Activated naive CD4-positive, alpha-beta T cell treated with anti-CD3 and anti-CD28 coated beads for 36 hours (primary cell): ENCODE measurements at regions of chr11 and their contacts with region 1.

Region 1: DNA sequence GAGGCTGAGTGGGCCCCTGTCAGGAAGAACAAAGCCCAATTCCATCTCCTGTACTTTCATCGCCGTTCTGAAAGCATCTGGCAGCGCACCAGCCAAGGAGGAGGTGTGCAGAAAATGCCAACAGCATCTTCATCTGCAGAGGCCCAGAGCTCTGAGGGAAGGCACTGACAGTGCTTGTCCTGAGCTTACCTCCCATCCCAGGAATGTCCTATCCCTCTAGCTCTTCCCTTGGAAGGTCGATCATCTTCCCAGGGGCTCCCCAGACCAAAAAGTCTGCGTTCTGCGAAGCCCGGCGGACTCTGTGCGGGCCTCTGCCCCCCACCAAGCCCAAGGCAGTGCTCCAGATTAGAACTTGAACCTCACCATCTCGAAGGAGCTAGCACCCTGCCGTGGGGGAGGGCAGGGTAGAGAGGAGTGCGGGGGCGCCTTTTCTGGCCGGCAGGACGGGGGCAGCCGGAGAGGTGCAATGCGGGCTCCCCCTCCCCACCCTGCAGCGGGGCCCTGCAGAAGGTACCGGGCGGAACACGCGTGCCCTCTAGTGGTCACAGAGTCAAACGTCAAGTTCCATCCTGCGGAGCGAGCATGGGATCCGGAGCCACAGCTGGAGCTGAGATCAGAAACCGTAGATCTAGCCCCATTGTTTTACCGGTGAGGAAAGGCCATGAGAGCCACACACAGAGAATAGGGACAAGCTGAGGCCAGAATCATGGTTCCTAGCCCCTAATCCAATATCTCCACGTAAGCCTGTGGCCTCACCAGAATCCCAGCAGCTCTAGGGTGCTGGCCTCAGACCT is 5.0 kb downstream of the SCN2B start:
- DNase-seq: peak; percentile 84
- H3K4me3 Mint-ChIP-seq: no peak overlapping the region
- H3K27ac Mint-ChIP-seq: no peak overlapping the region
- H3K4me1 Mint-ChIP-seq: peaks cover 2% of the 10 kb centered on the region
- H3K27me3 Mint-ChIP-seq: peaks cover 2% of the 10 kb centered on the region

Region 2: DNA sequence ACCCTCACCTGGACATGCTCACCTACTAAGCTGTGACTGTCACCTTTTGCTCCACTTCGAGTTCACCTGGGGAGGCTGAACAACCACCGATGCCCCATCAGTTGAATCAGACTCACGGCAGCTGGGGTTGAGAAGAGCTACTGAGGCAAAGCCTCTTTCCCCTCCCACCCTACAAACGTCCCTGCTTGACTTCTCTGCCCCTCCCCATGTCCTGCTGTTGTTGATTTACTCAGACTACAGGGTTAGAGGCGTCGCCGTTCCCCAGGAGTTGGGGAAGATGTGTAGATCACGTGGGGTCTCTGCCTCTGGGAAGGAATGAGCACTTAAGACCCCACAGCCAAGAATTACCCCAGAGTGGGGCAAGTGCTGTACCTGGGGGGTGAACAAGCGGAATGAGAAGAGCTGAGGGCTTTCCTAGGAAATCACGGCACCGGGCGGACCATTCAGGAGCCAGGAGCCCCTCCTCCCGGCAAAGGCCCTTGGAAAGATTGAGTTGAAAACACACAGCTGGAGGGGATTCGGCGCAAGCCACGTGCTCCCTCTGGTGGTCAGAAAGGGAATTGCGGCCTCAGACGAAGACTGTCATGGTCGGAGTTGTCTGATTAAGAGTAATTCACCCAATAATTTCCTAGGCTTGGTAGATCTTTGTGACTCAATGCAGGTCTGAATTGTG is 354.0 kb before region 1 on chr11:
- CTCF ChIA-PET with region 1: interaction called, 8 read pairs
- intact Hi-C with region 1: loop called (anchors 5 kb)
- DNase-seq: peak; percentile 98
- H3K4me3 Mint-ChIP-seq: peak overlapping the region; percentile 56
- H3K27ac Mint-ChIP-seq: peak overlapping the region; percentile 95
- H3K4me1 Mint-ChIP-seq: peaks cover 65% of the 10 kb centered on the region
- H3K27me3 Mint-ChIP-seq: no peaks in the 10 kb centered on the region

Region 3: DNA sequence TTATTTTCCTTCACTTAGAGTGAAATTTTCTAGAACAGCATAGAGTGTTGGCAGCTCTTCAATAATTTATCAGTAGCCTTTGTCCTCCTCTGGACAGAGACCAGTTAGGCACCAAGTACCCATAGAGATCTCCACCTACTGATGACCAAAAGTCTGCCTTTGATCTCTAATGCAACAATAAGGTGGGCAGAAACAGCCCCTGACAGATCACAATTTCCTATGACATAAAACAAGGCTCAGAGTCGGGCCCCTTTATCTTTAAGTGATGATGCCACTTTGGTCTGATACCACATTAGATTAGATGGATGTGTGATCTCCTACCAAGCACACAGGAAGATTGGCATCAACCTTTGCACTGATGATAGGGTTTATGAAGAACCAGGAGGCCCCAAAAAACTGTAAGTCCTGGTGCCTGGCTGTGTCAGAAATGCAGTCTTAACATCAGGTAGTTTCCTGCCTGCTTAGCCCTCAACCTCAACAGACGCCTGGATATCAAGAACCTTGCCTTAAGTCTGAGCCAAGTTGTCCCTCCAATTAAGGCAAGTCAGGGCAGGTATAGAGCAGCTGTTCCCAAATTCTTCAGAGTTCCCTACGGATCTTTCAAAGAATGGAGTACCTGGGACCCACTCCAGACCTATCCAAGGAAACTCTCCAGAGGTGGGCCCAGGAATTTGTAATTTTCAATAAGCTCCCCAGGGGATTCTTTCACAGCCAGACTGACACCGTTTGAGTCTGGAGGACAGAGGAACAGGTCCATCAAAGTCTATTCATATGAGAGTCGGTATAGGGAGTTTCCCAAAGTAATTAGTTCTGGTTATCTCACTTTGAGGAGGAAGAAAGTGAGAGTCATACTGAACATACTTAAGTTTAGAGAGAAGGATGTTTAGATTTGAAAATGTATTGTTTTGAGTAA is 125.2 kb before region 1 on chr11:
- CTCF ChIA-PET with region 1: no interaction called
- intact Hi-C with region 1: no loop called
- DNase-seq: peak; percentile 52
- H3K4me3 Mint-ChIP-seq: no peak overlapping the region
- H3K27ac Mint-ChIP-seq: peak overlapping the region; percentile 63
- H3K4me1 Mint-ChIP-seq: peaks cover 78% of the 10 kb centered on the region
- H3K27me3 Mint-ChIP-seq: no peaks in the 10 kb centered on the region

Region 4: DNA sequence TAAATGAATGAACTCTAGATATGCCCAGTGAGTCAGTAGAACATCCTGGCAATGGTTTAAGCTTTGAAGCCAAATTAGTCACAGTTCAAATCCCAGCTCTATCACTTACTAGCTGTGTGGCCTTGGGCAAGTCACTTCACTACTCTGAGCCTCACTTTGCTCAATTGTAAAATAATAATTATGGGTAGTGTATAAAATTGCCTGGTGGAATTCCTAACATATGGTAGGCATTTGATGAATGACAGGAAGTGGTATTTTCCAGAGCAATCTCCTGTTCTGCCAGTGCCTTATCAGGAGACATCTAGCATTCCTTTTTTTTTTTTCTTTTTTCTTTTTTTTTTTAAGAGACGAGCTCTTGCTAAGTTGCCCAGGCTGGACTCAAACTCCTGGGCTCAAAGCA is 31.9 kb before region 1 on chr11:
- CTCF ChIA-PET with region 1: interaction called, 105 read pairs
- intact Hi-C with region 1: no loop called
- DNase-seq: no peak
- H3K4me3 Mint-ChIP-seq: no peak overlapping the region
- H3K27ac Mint-ChIP-seq: no peak overlapping the region
- H3K4me1 Mint-ChIP-seq: no peaks in the 10 kb centered on the region
- H3K27me3 Mint-ChIP-seq: peaks cover 31% of the 10 kb centered on the region

Region 5: DNA sequence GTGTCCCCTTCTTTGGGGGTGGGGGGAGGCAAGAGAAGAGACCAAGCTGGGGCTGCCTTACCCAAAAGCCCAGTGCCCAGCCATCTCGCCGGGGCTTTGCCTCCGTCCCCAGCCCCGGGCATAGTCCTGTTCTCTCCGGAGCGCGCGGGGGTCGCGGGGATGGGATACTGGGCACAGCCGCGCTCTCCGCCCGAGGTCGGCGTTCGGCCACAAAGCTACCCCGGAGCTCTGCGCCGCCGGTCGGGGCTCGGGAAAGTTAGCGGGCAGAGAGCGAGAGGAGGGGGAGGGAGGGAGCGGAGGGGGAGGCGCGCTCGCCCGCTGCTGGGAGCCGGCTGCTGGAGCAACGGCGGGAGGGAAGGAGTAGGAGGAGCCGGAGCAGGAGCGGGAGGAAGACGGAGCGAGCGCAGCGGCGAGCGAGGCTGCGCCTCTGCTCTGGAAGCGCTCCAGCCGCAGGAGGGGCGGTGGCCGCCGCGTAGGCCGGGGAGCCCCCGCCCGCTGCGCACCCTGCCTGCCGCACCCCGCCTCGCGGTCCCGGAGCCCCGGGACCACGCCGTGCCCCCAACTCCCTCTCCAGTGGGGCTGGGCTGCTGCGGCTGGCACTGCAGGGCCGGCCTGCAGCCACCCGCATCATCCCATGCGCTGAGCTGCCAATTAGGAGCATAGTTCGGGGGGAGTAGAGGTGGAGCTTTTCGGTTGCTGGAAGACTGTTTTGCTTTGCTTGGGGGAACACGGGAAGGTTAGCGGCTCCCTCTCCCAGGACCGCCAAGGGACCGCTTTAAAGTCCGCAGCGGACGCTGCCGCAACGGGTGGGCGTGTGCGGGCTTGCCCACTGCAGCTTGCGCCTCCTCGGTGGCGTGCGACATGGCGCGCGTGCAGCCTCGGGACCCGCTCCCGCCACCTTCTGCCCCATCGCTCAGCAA is 18.7 kb before region 1 on chr11 and contains the start of gene SCN4B:
- CTCF ChIA-PET with region 1: interaction called, 74 read pairs
- intact Hi-C with region 1: no loop called
- DNase-seq: no peak
- H3K4me3 Mint-ChIP-seq: peak within 1 kb of the TSS; percentile 60
- H3K27ac Mint-ChIP-seq: no peak within 1 kb of the TSS
- H3K4me1 Mint-ChIP-seq: peaks cover 11% of the 10 kb centered on the region
- H3K27me3 Mint-ChIP-seq: peaks cover 58% of the 10 kb centered on the region
- total RNA-seq, gene SCN4B: 0.07 to 0.12 TPM

Region 6: DNA sequence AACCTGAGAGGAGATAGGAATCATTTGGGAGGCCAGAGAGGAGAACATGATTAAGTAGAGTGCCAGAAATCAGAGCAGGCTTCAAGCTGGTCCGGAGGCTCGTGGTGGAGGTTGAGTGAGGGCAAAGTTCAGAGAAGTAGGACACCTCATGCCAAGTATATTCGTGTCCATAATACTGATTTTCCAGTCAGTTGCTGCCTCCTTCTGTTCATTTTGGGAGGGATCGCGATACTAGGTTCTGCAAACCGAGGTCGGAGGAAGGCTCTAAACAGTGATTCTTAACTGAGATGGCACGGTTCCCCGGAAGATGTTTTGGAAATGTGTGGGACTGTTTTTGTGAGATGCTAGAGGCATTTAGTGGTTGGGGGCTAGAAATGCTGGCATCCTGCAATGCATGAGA is 119.5 kb after region 1 on chr11:
- CTCF ChIA-PET with region 1: interaction called, 16 read pairs
- intact Hi-C with region 1: no loop called
- DNase-seq: peak; percentile 74
- H3K4me3 Mint-ChIP-seq: no peak overlapping the region
- H3K27ac Mint-ChIP-seq: no peak overlapping the region
- H3K4me1 Mint-ChIP-seq: peaks cover 28% of the 10 kb centered on the region
- H3K27me3 Mint-ChIP-seq: no peaks in the 10 kb centered on the region

Region 7: DNA sequence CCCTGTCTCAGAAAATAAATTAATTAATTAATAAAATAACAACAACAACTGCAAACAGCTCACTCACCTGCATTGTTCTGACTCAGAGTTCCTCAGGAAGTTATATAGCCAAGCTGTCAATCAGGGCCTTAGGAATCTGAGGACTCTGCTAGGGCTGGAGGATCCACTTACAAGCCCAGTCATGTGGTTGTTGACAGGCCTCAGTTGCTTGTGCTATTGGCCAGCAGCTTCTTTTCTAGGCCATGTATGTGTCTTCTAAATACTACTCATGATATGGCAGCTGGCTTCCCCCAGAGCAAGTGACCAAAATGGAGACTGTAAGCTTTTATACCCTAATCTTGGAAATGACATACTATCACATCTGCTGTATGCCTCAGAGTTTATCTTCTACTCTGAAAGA is 209.1 kb after region 1 on chr11:
- CTCF ChIA-PET with region 1: interaction called, 11 read pairs
- intact Hi-C with region 1: no loop called
- DNase-seq: no peak
- H3K4me3 Mint-ChIP-seq: no peak overlapping the region
- H3K27ac Mint-ChIP-seq: no peak overlapping the region
- H3K4me1 Mint-ChIP-seq: peaks cover 7% of the 10 kb centered on the region
- H3K27me3 Mint-ChIP-seq: no peaks in the 10 kb centered on the region